AG04449 (cell line): ENCODE measurements at regions of chr16 and their contacts with region 1.

Region 1: DNA sequence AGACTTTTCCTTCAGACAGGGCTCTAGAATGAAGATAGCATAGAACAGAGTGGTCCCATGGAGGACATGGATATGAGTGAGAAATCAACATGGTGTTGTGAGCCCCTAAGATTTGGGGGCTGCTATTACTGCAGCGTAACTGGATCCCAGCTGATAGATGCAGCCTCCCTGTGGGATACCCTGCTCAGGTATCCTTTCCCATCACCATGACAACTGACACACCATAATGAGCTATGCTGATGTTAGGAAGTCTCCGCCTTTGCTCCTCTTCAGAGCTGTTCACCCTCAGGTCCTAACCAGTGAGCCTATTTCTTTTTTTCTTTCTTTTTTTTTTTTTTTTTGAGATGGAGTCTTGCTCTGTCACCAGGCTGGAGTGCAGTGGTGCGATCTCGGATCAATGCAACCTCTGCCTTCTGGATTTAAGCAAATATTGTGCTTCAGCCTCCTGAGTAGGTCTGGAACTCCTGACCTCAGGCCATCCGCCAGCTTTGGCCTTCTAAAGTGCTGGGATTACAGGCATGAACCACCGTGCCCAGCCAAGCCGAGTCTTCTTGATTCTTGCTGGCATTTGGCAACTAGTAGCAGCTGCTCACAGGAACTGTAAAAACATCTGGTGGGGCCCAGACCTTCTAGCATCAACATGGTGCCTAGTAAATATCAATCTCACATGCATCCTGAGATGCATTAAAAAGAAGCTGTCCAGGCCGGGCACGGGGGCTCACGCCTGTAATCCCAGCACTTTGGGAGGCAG is 17.1 kb downstream of the STX4 start:
- DNase-seq: no peak
- H3K4me3 ChIP-seq: no peak overlapping the region
- CTCF ChIP-seq: no peak

Region 2: GRCh38 chr16:31032736-31033708 is 17.4 kb before region 1 on chr16 and contains the start of gene STX4:
- CTCF ChIA-PET with region 1: interaction called, 6 read pairs
- POLR2A ChIA-PET with region 1: interaction called, 10 read pairs
- DNase-seq: peak; percentile 77
- H3K4me3 ChIP-seq: peak within 1 kb of the TSS; percentile 99
- CTCF ChIP-seq: no peak

Region 3: DNA sequence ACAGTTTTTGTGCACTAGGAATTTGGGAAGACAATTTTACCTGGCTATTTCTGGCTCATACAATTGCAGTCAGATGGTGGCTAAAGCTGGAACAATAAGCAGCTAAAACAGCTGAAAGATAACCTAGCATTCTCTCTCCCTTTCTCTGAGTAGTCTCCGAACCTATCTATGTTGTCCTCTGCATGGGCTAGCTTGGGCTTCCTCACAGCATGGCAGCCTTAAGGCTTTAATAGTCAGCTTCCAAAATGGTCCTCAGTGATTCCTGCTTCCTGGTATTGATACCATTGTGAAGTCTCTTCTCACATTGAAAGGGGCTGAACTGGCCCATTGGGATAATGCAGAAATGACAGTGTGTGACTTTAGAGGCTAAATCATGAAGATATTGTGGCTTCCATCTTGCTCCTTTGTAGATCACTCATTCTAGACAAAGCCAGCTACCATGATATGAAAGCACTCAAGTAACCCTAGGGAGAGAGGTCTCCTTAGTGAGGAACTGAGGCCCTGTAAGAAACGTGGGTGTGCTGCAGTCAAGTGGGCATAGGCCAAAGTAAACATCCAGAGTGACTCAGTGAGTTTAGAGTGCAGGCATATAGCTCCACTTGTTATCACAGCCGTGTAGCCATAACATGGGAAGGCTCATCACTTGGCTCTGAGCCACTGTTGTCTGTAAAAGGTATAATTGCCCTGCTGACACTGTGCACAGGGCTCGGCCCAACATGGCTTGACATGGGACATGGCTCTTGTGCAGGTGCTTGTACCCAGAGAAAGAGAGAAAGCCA is 49.6 kb after region 1 on chr16:
- CTCF ChIA-PET with region 1: no interaction called
- POLR2A ChIA-PET with region 1: no interaction called
- DNase-seq: no peak
- H3K4me3 ChIP-seq: no peak overlapping the region
- CTCF ChIP-seq: no peak